ENCODE measurements at regions of chr10 and their contacts with region 1.

Region 1: DNA sequence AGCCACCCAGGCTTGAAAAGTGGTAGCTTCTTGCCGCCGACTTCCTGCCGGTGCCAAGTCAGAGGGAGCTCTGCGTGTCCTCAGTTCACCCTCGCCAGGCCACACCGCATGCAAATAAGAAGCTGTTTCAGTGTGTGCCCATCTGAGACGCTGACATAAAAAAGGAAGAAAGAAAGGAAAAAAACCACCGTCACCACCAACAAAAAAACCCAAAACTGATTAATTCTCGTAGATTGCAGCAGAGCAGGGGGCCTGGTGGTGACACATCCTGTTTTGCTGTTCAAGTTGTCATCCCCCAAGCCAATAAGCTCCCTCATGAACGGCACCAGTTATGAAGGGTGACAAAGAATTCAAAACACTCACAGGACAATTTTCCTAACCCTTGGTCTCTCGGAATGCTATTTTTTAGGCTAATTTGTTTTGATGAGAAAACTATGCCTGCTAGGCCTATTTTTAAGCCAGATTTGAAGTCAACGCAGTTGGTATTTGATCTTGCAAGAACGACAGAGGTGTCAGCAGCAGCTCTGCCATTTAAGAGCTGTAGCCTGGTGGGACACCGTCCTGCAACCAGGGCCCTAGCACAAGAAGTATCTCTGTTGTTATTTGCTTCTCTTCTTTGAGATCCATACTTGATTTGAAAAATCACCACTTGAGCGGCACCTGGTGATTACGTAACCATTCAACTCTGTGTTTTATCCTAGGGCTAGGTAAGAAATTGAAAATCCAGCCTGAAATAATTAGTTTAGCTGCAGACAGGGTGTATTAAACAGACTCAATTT is 145.6 kb downstream of the PFKFB3 start:
- DNase-seq: peak; percentile 93 to 98 (median 94)
- H3K4me3 ChIP-seq: peak overlapping the region in 1 of 3 experiments; percentile 38
- H3K4me3 Mint-ChIP-seq: peak overlapping the region; percentile 61 to 84
- H3K27ac ChIP-seq: peak overlapping the region; percentile 51 to 83
- H3K27ac Mint-ChIP-seq: peak overlapping the region; percentile 91 to 95 (median 93)
- H3K4me1 ChIP-seq: peaks cover 26 to 31% of the 10 kb centered on the region in 2 donors
- H3K4me1 Mint-ChIP-seq: peaks cover 41% of the 10 kb centered on the region
- H3K27me3 ChIP-seq: no peaks in the 10 kb centered on the region
- H3K27me3 Mint-ChIP-seq: peaks cover 0 to 7% (median 1%) of the 10 kb centered on the region in 3 donors
- CTCF ChIP-seq: no peak

Region 2: GRCh38 chr10:6072215-6072934 is 275.9 kb before region 1 on chr10:
- intact Hi-C with region 1: no loop called
- DNase-seq: no peak
- H3K4me3 ChIP-seq: peak overlapping the region in 1 of 3 experiments; percentile 27
- H3K4me3 Mint-ChIP-seq: peak overlapping the region; percentile 15 to 20
- H3K27ac ChIP-seq: peak overlapping the region in 1 of 2 donors; percentile 63
- H3K27ac Mint-ChIP-seq: peak overlapping the region in 6 of 7 donors; percentile 0 to 87 (median 58)
- H3K4me1 ChIP-seq: peaks cover 51 to 56% of the 10 kb centered on the region in 2 donors
- H3K4me1 Mint-ChIP-seq: peaks cover 60% of the 10 kb centered on the region
- H3K27me3 ChIP-seq: no peaks in the 10 kb centered on the region
- H3K27me3 Mint-ChIP-seq: peaks cover 0 to 4% (median 4%) of the 10 kb centered on the region in 3 donors
- CTCF ChIP-seq: no peak

Region 3: DNA sequence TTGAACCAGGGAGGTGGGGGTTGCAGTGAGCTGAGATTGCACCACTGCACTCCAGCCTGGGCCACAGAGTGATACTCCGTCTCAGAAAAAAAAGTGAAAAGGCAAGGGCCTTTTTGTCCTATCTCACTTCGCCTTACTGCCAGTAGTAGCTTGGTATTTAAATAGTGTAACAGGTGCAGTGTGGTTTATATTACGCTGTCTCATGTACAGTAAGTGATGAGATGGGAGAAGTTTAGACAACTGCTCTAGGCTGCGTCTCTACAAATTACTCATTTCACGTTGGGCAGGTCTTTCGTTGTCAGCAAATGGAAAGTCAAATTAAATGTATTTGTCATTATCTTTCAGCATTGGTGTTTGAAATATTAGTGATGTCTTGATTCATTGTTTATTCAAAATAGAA is 161.0 kb before region 1 on chr10:
- intact Hi-C with region 1: no loop called
- DNase-seq: no peak
- H3K4me3 ChIP-seq: no peak overlapping the region
- H3K4me3 Mint-ChIP-seq: no peak overlapping the region
- H3K27ac ChIP-seq: peak overlapping the region in 1 of 2 donors; percentile 53
- H3K27ac Mint-ChIP-seq: peak overlapping the region in 1 of 7 donors; percentile 43
- H3K4me1 ChIP-seq: peaks cover 29 to 51% of the 10 kb centered on the region in 2 donors
- H3K4me1 Mint-ChIP-seq: peaks cover 65% of the 10 kb centered on the region
- H3K27me3 ChIP-seq: no peaks in the 10 kb centered on the region
- H3K27me3 Mint-ChIP-seq: peaks cover 0 to 1% (median 0%) of the 10 kb centered on the region in 3 donors
- CTCF ChIP-seq: no peak

Region 4: DNA sequence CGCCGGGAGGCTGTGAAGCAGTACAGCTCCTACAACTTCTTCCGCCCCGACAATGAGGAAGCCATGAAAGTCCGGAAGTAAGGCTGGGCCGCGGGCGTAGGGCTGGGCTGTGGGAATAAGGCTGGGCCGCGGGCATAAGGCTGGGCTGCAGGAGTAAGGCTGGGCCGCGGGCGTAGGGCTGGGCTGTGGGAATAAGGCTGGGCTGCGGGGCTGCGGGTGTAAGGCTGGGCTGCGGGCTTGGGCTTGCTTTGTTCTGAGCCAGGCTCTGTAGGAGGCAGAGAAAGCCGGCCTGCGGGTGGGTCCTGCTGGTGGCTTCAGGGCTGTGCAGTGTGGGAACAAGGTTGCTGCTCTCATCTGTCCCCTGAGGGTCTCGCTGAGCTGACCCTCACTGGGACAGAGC is 133.0 kb before region 1 on chr10:
- intact Hi-C with region 1: no loop called
- DNase-seq: no peak
- H3K4me3 ChIP-seq: no peak overlapping the region
- H3K4me3 Mint-ChIP-seq: no peak overlapping the region
- H3K27ac ChIP-seq: no peak overlapping the region
- H3K27ac Mint-ChIP-seq: peak overlapping the region in 2 of 7 donors; percentile 15 to 18
- H3K4me1 ChIP-seq: no peaks in the 10 kb centered on the region
- H3K4me1 Mint-ChIP-seq: peaks cover 3% of the 10 kb centered on the region
- H3K27me3 ChIP-seq: no peaks in the 10 kb centered on the region
- H3K27me3 Mint-ChIP-seq: peaks cover 0 to 2% (median 0%) of the 10 kb centered on the region in 3 donors
- CTCF ChIP-seq: no peak

Region 5: GRCh38 chr10:6269953-6270867 is 78.1 kb before region 1 on chr10:
- intact Hi-C with region 1: loop called in 1 of 2 experiments (anchors 10 kb)
- DNase-seq: peak; percentile 60 to 86 (median 82)
- H3K4me3 ChIP-seq: no peak overlapping the region
- H3K4me3 Mint-ChIP-seq: no peak overlapping the region
- H3K27ac ChIP-seq: peak overlapping the region in 1 of 2 donors; percentile 57
- H3K27ac Mint-ChIP-seq: peak overlapping the region in 6 of 7 donors; percentile 77 to 100 (median 88)
- H3K4me1 ChIP-seq: peaks cover 51 to 54% of the 10 kb centered on the region in 2 donors
- H3K4me1 Mint-ChIP-seq: peaks cover 60% of the 10 kb centered on the region
- H3K27me3 ChIP-seq: no peaks in the 10 kb centered on the region
- H3K27me3 Mint-ChIP-seq: peaks cover 0 to 10% (median 7%) of the 10 kb centered on the region in 3 donors
- CTCF ChIP-seq: no peak

Region 6: DNA sequence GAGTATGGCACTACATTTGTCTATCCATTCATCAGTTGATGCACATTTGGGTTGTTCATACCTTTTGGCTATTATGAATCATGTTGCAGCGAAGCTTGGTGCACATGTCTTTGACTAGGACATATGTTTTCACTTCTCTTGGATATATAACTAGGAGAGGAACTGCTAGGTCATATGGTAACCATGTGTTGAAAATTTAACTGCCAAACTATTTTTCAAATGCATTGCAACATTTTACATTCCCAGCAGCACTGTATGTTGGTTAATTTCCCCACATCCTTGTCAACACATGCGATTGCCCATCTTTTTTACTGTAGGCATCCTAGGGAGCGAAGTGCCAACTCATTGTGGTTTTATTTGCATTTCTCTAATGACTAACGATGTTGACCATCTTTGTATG is 48.4 kb after region 1 on chr10:
- intact Hi-C with region 1: loop called (anchors 1 to 10 kb)
- DNase-seq: peak; percentile 91 to 98 (median 97)
- H3K4me3 ChIP-seq: no peak overlapping the region
- H3K4me3 Mint-ChIP-seq: peak overlapping the region in 1 of 2 donors; percentile 74
- H3K27ac ChIP-seq: peak overlapping the region; percentile 85 to 91
- H3K27ac Mint-ChIP-seq: peak overlapping the region; percentile 91 to 100 (median 98)
- H3K4me1 ChIP-seq: peaks cover 68 to 72% of the 10 kb centered on the region in 2 donors
- H3K4me1 Mint-ChIP-seq: peaks cover 73% of the 10 kb centered on the region
- H3K27me3 ChIP-seq: no peaks in the 10 kb centered on the region
- H3K27me3 Mint-ChIP-seq: peaks cover 0 to 7% (median 1%) of the 10 kb centered on the region in 3 donors
- CTCF ChIP-seq: no peak

Region 7: DNA sequence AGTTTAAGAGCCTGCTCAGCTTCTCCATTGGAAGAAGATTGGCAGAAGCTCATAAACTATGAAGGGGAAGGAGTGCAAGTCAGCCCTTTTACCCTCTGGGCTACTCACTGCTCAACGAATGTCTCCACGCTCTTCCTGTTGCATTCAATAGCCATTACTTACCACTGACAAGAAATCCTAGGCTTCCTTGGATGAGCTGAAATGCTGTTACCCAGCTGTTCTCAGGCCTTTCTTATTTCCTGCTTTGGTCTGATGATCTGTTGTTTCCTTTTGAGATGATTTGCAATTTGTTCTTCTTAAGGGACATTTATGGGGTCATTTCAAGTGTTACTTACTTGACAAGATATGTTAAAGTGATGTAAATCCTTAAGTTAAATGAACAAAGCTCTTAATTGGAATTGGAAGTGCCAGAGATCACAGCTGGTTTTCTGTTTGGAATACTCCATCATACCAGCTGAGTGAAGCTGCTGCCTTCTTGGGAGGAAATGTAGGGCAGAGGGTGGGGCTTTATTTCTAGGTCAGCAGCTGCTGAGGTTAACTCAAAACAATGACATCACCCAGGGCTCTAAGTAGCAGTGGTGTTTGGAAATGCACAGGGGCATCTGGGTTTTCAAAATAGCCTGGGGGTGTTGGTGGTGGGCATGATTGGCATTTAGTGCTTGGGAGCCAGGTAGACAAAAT is 61.8 kb after region 1 on chr10:
- intact Hi-C with region 1: no loop called
- DNase-seq: peak in 1 of 3 donors; percentile 30
- H3K4me3 ChIP-seq: no peak overlapping the region
- H3K4me3 Mint-ChIP-seq: no peak overlapping the region
- H3K27ac ChIP-seq: peak overlapping the region in 1 of 2 donors; percentile 33
- H3K27ac Mint-ChIP-seq: peak overlapping the region; percentile 55 to 87 (median 81)
- H3K4me1 ChIP-seq: peaks cover 19 to 22% of the 10 kb centered on the region in 2 donors
- H3K4me1 Mint-ChIP-seq: peaks cover 27% of the 10 kb centered on the region
- H3K27me3 ChIP-seq: no peaks in the 10 kb centered on the region
- H3K27me3 Mint-ChIP-seq: peaks cover 0 to 2% (median 1%) of the 10 kb centered on the region in 3 donors
- CTCF ChIP-seq: no peak

Measured in CD14-positive monocyte (primary cell).